CD14-positive monocyte (primary cell): ENCODE measurements at regions of chr1 and their contacts with region 1.

Region 1: DNA sequence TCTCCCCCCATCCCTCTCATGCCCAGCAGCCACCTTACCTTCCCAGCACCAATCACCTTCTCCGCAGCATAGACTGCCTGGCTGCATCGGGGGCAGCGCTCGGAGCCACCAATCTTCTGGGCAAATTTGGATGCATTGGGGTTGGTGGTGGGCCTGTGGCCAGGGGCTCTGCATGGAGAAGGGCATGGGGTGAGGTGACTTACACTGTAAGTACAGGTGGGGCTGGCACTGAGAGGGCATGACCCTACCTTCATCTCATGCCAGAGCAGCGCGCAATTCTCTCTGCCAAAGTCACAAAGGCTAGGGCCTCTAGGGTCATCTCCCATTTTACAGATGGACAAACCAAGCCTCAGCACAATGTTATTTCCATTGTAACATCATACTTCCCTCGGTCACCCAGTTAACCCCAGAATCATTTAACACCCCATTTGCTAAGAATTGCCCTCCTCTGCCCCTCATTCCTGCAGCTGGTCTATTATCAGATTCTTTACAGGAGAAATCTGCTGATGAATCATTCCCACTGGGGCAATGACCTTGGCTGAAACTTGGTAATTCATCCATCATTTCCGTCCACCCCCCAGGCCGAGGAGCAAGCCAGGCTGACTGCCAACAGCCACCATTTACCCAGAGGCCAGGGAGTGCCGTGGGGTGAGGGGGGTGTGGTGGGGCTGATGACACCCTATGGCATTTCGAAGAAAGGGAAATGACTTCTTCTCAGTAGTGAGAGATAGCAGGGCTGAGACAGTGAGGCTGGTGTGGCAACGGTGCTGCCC is 17.9 kb downstream of the CSRP1 start:
- DNase-seq: peak; percentile 58 to 76 (median 71)
- H3K4me3 ChIP-seq: peak overlapping the region in 1 of 3 experiments; percentile 23
- H3K4me3 Mint-ChIP-seq: peak overlapping the region; percentile 43 to 62
- H3K27ac ChIP-seq: peak overlapping the region; percentile 74 to 87
- H3K27ac Mint-ChIP-seq: peak overlapping the region; percentile 90 to 96 (median 95)
- H3K4me1 ChIP-seq: peaks cover 42% of the 10 kb centered on the region in 2 donors
- H3K4me1 Mint-ChIP-seq: peaks cover 54% of the 10 kb centered on the region
- H3K27me3 ChIP-seq: no peaks in the 10 kb centered on the region
- H3K27me3 Mint-ChIP-seq: peaks cover 0 to 5% (median 4%) of the 10 kb centered on the region in 3 donors
- CTCF ChIP-seq: no peak

Region 2: DNA sequence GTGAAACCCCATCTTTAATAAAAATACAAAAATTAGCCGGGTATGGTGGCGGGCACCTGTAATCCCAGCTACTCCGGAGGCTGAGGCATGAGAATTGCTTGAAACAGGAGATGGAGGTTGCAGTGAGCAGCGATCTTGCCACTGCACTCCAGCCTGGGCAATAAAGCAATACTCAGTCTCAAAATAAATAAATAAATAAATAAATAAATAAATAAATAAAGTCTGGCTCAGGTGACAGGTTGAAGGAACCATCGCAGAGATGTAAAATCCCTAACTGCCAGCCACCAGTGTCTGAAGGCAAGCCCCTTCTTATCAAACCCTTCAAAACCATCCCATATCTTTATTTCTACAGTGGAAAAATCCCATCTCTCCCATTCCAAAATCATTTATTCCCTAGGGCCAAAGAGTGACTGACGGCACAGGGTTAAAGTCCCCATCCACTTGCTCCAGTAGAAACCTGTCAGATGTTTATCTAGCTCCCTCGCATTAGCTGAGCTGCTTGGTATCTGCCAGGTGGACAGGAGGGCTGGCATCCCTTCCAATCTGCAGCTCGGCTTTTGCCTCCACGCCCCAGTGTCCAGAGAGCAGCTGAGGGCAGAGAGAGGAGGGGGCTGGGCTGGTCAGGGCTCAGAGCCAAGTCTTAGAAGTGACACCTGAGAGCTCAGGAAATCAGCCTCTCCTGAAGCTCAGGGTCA is 13.0 kb after region 1 on chr1:
- intact Hi-C with region 1: loop called in 1 of 2 experiments (anchors 2 kb)
- DNase-seq: no peak
- H3K4me3 ChIP-seq: no peak overlapping the region
- H3K4me3 Mint-ChIP-seq: no peak overlapping the region
- H3K27ac ChIP-seq: no peak overlapping the region
- H3K27ac Mint-ChIP-seq: no peak overlapping the region
- H3K4me1 ChIP-seq: peaks cover 23 to 24% of the 10 kb centered on the region in 2 donors
- H3K4me1 Mint-ChIP-seq: peaks cover 37% of the 10 kb centered on the region
- H3K27me3 ChIP-seq: no peaks in the 10 kb centered on the region
- H3K27me3 Mint-ChIP-seq: peaks cover 0 to 2% (median 0%) of the 10 kb centered on the region in 3 donors
- CTCF ChIP-seq: no peak

Region 3: DNA sequence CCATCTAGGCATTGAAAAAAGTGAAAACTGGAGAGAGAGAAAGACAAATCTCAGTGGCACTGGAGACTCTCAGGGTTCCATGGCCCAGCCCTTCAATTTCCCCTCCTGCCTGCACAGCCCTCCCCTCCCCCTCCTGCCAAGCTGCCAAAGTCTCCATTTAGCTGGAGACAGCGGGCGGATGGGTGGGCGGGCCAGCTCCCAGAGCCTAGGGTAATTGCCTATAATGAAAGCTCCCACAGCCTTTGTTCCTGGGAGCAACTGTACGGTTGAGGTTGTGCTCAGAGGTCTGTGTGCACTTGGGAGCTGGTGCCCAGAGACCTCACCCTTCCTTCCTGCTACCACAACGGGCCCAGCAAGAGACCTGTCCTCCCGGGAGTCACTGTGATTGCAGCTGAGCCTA is 139.5 kb after region 1 on chr1:
- intact Hi-C with region 1: no loop called
- DNase-seq: no peak
- H3K4me3 ChIP-seq: no peak overlapping the region
- H3K4me3 Mint-ChIP-seq: no peak overlapping the region
- H3K27ac ChIP-seq: no peak overlapping the region
- H3K27ac Mint-ChIP-seq: no peak overlapping the region
- H3K4me1 ChIP-seq: peaks cover 0 to 14% of the 10 kb centered on the region in 2 donors
- H3K4me1 Mint-ChIP-seq: peaks cover 19% of the 10 kb centered on the region
- H3K27me3 ChIP-seq: no peaks in the 10 kb centered on the region
- H3K27me3 Mint-ChIP-seq: peaks cover 0 to 1% (median 1%) of the 10 kb centered on the region in 3 donors
- CTCF ChIP-seq: no peak